ENCODE measurements at regions of chr1 and their contacts with region 1.

Region 1: GRCh38 chr1:220294846-220295301 is 22.6 kb upstream of the RAB3GAP2 start:
- DNase-seq: no peak
- ATAC-seq: no peak
- H3K4me3 ChIP-seq: no peak overlapping the region
- H3K27ac ChIP-seq: no peak overlapping the region
- H3K4me1 ChIP-seq: peaks cover 0 to under 1% of the 10 kb centered on the region in 2 experiments; a peak in 3 of 5 replicates
- H3K27me3 ChIP-seq: peaks cover 8 to 12% of the 10 kb centered on the region in 2 experiments; a peak in 4 of 5 replicates
- CTCF ChIP-seq: no peak
- EP300 ChIP-seq: no peak
- POLR2A ChIP-seq: no peak
- RAD21 ChIP-seq: no peak

Region 2: GRCh38 chr1:219771080-219771479 is 523.8 kb before region 1 on chr1:
- CTCF ChIA-PET with region 1: no interaction called
- POLR2A ChIA-PET with region 1: no interaction called
- in situ Hi-C with region 1: no loop called
- intact Hi-C with region 1: no loop called
- DNase-seq: no peak
- ATAC-seq: no peak
- H3K4me3 ChIP-seq: no peak overlapping the region
- H3K27ac ChIP-seq: no peak overlapping the region
- H3K4me1 ChIP-seq: no peaks in the 10 kb centered on the region
- H3K27me3 ChIP-seq: no peaks in the 10 kb centered on the region; a peak in 2 of 5 replicates
- CTCF ChIP-seq: no peak
- EP300 ChIP-seq: no peak
- POLR2A ChIP-seq: no peak
- RAD21 ChIP-seq: no peak

Region 3: DNA sequence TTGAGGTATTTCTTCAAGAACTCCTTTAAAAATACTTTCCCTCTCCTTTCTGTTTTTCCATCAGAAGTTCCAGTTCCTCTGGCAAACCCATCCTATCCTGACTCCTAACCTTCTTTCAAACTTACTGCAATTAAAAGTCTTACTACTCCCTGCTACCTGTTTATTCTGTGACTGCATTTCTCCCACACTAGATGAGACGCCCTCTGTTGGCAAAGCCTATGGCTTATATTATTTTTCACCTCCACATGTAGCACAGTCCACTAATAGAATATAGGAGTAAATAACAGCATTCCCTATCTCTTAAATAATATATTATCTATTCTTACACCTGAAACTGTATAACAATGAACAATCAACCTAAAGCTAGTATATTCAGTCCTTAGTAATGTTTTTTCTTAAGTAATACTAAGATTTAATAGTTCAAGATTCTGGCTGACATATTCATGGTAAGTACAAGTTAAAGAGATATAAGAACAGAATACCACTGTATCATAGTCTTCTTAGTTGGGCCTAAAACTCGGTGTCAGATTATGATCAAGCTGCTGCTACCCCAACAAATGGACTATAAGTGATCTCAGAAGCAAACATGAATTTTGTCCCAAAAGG is 77.4 kb before region 1 on chr1:
- CTCF ChIA-PET with region 1: no interaction called
- POLR2A ChIA-PET with region 1: no interaction called
- in situ Hi-C with region 1: no loop called
- intact Hi-C with region 1: loop called (anchors 1 kb)
- DNase-seq: peak in 2 of 4 experiments; percentile 42 to 49
- ATAC-seq: peak; percentile 76
- H3K4me3 ChIP-seq: no peak overlapping the region
- H3K27ac ChIP-seq: no peak overlapping the region
- H3K4me1 ChIP-seq: peaks cover 0 to 9% of the 10 kb centered on the region in 2 experiments; a peak in 1 of 5 replicates
- H3K27me3 ChIP-seq: no peaks in the 10 kb centered on the region
- CTCF ChIP-seq: peak; percentile 56 to 66 (median 63); a peak in 5 of 6 replicates
- EP300 ChIP-seq: no peak
- POLR2A ChIP-seq: no peak
- RAD21 ChIP-seq: no peak; a peak in 1 of 4 replicates

Region 4: DNA sequence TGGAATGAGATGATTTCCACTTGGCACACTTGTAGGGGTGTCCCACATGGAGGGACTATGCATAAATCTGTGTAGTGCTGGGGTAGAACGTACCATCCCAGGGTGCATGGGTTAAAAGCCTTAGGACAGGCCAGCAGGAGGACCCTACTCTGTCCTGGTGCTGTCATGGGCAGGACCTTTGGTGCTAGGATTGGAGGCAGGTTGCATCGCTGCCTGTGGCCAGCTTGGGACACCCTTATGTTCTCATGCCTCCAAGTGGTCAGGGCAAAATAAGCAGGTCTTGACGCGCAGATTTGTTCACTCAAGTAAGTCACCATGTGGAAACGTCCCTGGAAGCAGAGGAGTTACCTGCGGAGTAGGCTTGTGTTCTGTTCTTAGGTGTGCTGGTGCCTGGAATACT is 26.9 kb after region 1 on chr1:
- CTCF ChIA-PET with region 1: no interaction called
- POLR2A ChIA-PET with region 1: no interaction called
- in situ Hi-C with region 1: no loop called
- intact Hi-C with region 1: loop called (anchors 1 kb)
- DNase-seq: peak in 2 of 4 experiments; percentile 20 to 29
- ATAC-seq: peak; percentile 81
- H3K4me3 ChIP-seq: no peak overlapping the region
- H3K27ac ChIP-seq: no peak overlapping the region
- H3K4me1 ChIP-seq: no peaks in the 10 kb centered on the region
- H3K27me3 ChIP-seq: peaks cover 5 to 15% of the 10 kb centered on the region in 2 experiments; a peak in 3 of 5 replicates
- CTCF ChIP-seq: peak; percentile 28 to 53 (median 32); a peak in 4 of 6 replicates
- EP300 ChIP-seq: no peak
- POLR2A ChIP-seq: no peak
- RAD21 ChIP-seq: peak; percentile 28 to 70

Region 5: DNA sequence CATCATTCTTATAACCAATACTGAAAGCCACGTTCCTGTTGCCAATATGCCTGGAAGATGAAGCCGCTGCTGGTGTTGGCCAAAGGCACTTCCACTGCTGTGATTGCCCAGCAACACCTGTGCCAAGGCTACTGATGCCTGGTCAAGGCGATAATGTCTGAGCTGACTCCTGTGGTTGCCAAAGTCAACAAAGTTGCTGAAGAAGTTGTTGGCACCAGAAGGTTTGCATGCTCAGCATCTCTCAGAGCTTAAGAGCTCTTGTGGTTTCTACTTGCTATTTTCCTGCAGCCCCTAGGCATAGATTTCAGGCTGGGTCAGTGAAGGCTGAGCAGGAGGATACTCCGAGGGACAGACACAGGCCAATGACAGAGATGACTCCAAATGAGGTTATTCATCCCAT is 40.8 kb after region 1 on chr1:
- CTCF ChIA-PET with region 1: no interaction called
- POLR2A ChIA-PET with region 1: no interaction called
- in situ Hi-C with region 1: no loop called
- intact Hi-C with region 1: loop called (anchors 5 kb)
- DNase-seq: no peak
- ATAC-seq: no peak
- H3K4me3 ChIP-seq: no peak overlapping the region
- H3K27ac ChIP-seq: no peak overlapping the region
- H3K4me1 ChIP-seq: no peaks in the 10 kb centered on the region
- H3K27me3 ChIP-seq: peaks cover 9 to 11% of the 10 kb centered on the region in 2 experiments; a peak in 4 of 5 replicates
- CTCF ChIP-seq: no peak
- EP300 ChIP-seq: no peak
- POLR2A ChIP-seq: no peak
- RAD21 ChIP-seq: no peak

Region 6: DNA sequence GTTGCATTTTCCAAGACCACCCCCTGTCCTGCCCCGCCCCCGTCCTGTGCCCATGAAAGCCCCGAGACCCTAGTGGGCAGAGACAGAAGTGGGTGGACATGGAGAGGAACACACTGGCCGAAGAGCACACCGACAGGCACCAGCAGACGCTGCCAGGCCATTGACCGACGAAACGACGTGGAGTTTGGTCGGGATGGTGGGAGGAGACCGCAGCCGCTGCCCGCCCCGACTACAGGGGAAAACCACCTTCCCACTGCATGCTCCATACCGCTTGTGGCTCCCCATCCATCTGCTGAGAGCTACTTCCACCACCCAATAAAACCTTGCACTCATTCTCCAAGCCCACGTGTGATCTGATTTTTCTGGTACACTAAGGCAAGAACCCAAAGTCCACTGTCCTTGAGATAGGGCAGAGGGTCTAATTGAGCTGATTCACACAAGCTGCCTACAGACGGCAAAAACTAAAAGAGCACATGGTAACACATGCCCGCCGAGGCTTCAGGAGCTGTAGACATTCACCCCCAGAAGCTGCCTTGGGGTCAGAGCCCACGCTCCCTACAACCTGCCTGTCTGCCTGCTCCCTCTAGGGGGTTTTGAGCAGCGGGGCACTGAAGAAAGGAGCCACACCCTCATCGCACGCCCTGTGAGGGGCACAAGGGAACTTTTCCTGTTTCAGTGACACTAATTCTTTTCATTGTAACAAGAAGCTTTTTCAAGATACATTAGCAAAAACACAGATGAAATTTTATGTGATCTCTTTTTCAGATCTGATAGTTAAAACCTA is 58.5 kb after region 1 on chr1:
- CTCF ChIA-PET with region 1: no interaction called
- POLR2A ChIA-PET with region 1: interaction called, 3 read pairs
- in situ Hi-C with region 1: no loop called
- intact Hi-C with region 1: loop called (anchors 5 kb)
- DNase-seq: peak in 1 of 4 experiments; percentile 27
- ATAC-seq: peak; percentile 91
- H3K4me3 ChIP-seq: no peak overlapping the region
- H3K27ac ChIP-seq: no peak overlapping the region
- H3K4me1 ChIP-seq: 0 out of 5 replicates have a peak, but pooled peaks cover 0 to 3% of the 10 kb centered on the region in 2 experiments
- H3K27me3 ChIP-seq: peaks cover 8 to 14% of the 10 kb centered on the region in 2 experiments; a peak in 4 of 5 replicates
- CTCF ChIP-seq: peak; percentile 11 to 50 (median 40); a peak in 3 of 6 replicates
- EP300 ChIP-seq: no peak
- POLR2A ChIP-seq: no peak
- RAD21 ChIP-seq: no peak

Region 7: GRCh38 chr1:220733090-220733601 is 438.3 kb after region 1 on chr1:
- CTCF ChIA-PET with region 1: no interaction called
- POLR2A ChIA-PET with region 1: no interaction called
- in situ Hi-C with region 1: no loop called
- intact Hi-C with region 1: loop called (anchors 5 kb)
- DNase-seq: peak; percentile 80 to 82 (median 82)
- ATAC-seq: peak; percentile 99
- H3K4me3 ChIP-seq: no peak overlapping the region
- H3K27ac ChIP-seq: no peak overlapping the region
- H3K4me1 ChIP-seq: no peaks in the 10 kb centered on the region
- H3K27me3 ChIP-seq: peaks cover 3 to 4% of the 10 kb centered on the region in 2 experiments; a peak in 1 of 5 replicates
- CTCF ChIP-seq: peak; percentile 82 to 84 (median 84)
- EP300 ChIP-seq: no peak
- POLR2A ChIP-seq: no peak
- RAD21 ChIP-seq: peak; percentile 70 to 78

Measured in K562 (cell line).